ENCODE measurements at regions of chr11 and their contacts with region 1.

Region 1: DNA sequence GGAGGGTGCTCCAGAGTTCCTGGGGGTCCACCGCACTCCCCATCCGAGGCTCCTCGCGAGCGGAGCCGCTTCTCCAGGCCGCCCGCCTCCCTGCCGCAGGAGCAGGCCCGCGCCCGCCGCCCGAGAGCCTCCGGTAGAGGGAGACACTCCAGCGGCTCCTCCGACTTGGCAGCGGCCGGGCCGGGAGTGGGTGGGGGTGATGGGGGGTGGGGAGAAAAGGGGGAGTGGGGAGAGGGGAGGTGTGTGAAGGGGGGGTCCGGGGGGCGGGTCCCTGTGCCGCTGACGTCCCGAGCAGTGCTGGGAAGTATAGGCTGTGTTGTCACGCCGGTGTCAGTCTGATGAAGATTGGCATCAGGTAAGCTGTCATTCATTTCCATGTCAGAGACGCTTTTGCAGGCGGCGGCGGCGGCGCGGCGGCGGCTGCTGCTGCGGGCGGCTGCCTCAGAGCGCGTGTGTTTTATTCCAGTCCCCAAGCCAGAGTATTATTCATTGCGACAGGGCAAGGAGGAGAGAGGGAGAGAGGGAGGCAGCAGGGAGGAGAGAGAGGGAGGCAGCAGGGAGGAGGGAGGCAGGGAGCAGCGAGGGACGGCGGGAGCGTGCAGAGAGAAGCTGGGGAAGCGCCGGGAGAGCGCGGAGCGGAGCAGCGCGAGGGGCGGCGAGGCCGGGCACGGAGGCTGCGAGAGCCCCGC is at the start of gene PKNOX2:
- DNase-seq: peak in 1 of 2 donors; percentile 83
- H3K4me3 ChIP-seq: peak within 1 kb of the TSS; percentile 52 to 82
- H3K27ac ChIP-seq: peak within 1 kb of the TSS; percentile 80 to 91
- H3K4me1 ChIP-seq: peaks cover 8 to 26% of the 10 kb centered on the region in 2 donors
- H3K27me3 ChIP-seq: no peaks in the 10 kb centered on the region
- CTCF ChIP-seq: peak; percentile 40 to 85 (median 73)
- total RNA-seq, gene PKNOX2: 12.1 TPM

Region 2: GRCh38 chr11:124812876-124813275 is 351.7 kb before region 1 on chr11:
- intact Hi-C with region 1: no loop called
- DNase-seq: no peak
- H3K4me3 ChIP-seq: no peak overlapping the region
- H3K27ac ChIP-seq: no peak overlapping the region
- H3K4me1 ChIP-seq: no peaks in the 10 kb centered on the region
- H3K27me3 ChIP-seq: no peaks in the 10 kb centered on the region
- CTCF ChIP-seq: no peak

Region 3: DNA sequence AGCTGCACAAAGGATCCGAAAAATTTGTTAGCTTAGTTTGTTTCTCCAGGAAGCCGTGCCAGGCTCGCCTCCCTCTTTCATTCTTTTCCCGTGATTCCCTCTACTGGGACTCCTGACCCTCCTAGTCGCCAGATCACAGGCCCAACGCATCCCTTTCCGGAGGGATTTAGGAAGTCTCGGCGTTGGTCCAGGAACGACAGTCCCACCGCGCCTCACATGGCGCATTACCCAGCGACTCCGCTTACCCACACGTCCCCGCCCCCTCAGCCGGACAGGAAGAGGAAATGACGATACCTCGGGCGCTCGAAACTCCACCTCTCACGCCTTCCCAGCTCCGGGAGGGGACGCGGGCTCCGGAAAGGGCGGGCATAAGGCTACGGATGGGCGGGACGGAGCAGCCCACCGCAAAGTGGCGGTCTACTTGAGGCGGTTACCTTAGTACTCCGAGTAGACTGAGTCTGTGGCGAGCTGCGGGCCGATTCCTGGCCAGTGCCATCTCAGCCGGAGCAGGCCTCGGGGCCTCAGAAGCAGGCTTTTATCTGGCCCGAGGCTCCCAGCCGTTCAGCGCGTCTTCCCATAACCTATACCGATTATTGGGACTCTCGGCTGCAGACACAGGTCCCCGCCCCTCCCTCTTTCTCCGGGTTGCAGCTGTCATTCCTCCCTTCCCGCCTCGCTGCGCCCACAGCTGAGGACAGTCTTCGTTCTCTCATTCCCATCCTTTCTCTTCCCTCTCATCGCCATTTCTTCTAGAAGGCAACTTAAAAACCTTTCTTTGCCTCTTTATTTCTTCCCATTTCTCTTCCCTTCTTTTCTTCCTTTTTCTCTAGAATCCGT is 210.6 kb before region 1 on chr11 and contains the start of gene CCDC15:
- intact Hi-C with region 1: loop called (anchors 5 kb)
- DNase-seq: peak; percentile 88 to 98
- H3K4me3 ChIP-seq: peak within 1 kb of the TSS; percentile 62 to 71
- H3K27ac ChIP-seq: peak within 1 kb of the TSS; percentile 68 to 78
- H3K4me1 ChIP-seq: peaks cover 0 to 8% of the 10 kb centered on the region in 2 donors
- H3K27me3 ChIP-seq: no peaks in the 10 kb centered on the region
- CTCF ChIP-seq: no peak
- total RNA-seq, gene CCDC15: not detected

Region 4: GRCh38 chr11:125224391-125225010 is 59.9 kb after region 1 on chr11:
- intact Hi-C with region 1: loop called (anchors 1 kb)
- DNase-seq: peak in 1 of 2 donors; percentile 77
- H3K4me3 ChIP-seq: no peak overlapping the region
- H3K27ac ChIP-seq: no peak overlapping the region
- H3K4me1 ChIP-seq: no peaks in the 10 kb centered on the region
- H3K27me3 ChIP-seq: no peaks in the 10 kb centered on the region
- CTCF ChIP-seq: peak; percentile 19 to 50 (median 29)

Region 5: GRCh38 chr11:125275905-125276618 is 111.5 kb after region 1 on chr11:
- intact Hi-C with region 1: loop called (anchors 5 kb)
- DNase-seq: no peak
- H3K4me3 ChIP-seq: no peak overlapping the region
- H3K27ac ChIP-seq: peak overlapping the region in 1 of 2 donors; percentile 14
- H3K4me1 ChIP-seq: peaks cover 4 to 10% of the 10 kb centered on the region in 2 donors
- H3K27me3 ChIP-seq: no peaks in the 10 kb centered on the region
- CTCF ChIP-seq: no peak

Region 6: GRCh38 chr11:125345421-125346178 is 181.0 kb after region 1 on chr11:
- intact Hi-C with region 1: loop called (anchors 1 kb)
- DNase-seq: peak; percentile 46 to 90
- H3K4me3 ChIP-seq: peak overlapping the region in 1 of 2 donors; percentile 16
- H3K27ac ChIP-seq: peak overlapping the region; percentile 61 to 83
- H3K4me1 ChIP-seq: peaks cover 0 to 11% of the 10 kb centered on the region in 2 donors
- H3K27me3 ChIP-seq: no peaks in the 10 kb centered on the region
- CTCF ChIP-seq: peak; percentile 85 to 92 (median 88)

Region 7: GRCh38 chr11:125404776-125405435 is 240.3 kb after region 1 on chr11:
- intact Hi-C with region 1: loop called (anchors 1 kb)
- DNase-seq: peak in 1 of 2 donors; percentile 80
- H3K4me3 ChIP-seq: peak overlapping the region in 1 of 2 donors; percentile 34
- H3K27ac ChIP-seq: no peak overlapping the region
- H3K4me1 ChIP-seq: peaks cover 0 to 8% of the 10 kb centered on the region in 2 donors
- H3K27me3 ChIP-seq: no peaks in the 10 kb centered on the region
- CTCF ChIP-seq: peak; percentile 94 to 99 (median 98)

Region 8: DNA sequence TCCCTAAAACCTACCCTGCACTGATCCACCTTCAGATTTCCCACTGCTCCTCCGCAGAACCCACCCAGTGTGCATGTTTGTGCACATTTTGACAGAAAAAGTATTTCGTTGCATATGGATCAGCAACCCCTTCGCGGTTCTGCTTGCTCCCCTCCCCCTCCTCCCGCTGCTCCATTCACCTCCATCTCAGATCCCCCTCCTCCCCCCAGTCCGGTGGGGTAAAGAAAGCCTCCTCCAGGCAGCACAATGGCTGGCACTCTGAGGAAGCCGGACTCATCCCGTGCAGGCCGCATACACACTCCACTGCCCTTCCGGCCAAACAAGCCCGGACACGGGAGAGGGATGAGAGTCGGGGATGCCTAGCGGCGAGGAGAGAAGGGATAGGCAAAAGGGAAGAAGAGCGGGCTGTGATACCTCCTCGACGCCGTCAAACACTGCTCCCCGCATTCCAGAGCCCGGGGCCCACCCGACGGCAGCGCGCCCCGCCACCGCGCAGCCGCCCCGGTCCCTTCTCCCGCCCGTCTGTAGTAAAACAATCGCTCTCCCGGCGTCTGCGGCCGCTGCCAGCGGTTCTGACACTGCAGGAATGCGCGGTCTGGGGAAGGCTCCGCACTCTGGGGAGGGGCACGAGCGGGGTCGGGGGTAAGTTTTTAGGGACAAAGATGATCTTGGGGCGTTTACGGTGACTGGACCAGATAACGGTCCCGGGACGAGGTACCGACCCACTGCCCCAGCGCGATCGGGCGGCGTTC is 330.6 kb after region 1 on chr11:
- intact Hi-C with region 1: loop called (anchors 10 kb)
- DNase-seq: peak in 1 of 2 donors; percentile 72
- H3K4me3 ChIP-seq: peak overlapping the region; percentile 63 to 98
- H3K27ac ChIP-seq: peak overlapping the region; percentile 80 to 96
- H3K4me1 ChIP-seq: peaks cover 7 to 8% of the 10 kb centered on the region in 2 donors
- H3K27me3 ChIP-seq: no peaks in the 10 kb centered on the region
- CTCF ChIP-seq: no peak